ENCODE measurements at regions of chr16 and their contacts with region 1.

Region 1: GRCh38 chr16:12896562-12896961 is 4.8 kb upstream of the SHISA9 start:
- DNase-seq: peak; percentile 32
- ATAC-seq: peak; percentile 84
- H3K4me3 ChIP-seq: no peak overlapping the region
- H3K27ac ChIP-seq: no peak overlapping the region
- H3K4me1 ChIP-seq: peaks cover 3 to 5% of the 10 kb centered on the region in 2 experiments; a peak in 2 of 4 replicates
- H3K27me3 ChIP-seq: peaks cover 3% of the 10 kb centered on the region; the same call in 1 of the 2 replicates
- CTCF ChIP-seq: peak; percentile 41 to 74 (median 70); a peak in 5 of 6 replicates
- POLR2A ChIP-seq: no peak
- RAD21 ChIP-seq: peak; percentile 67

Region 2: DNA sequence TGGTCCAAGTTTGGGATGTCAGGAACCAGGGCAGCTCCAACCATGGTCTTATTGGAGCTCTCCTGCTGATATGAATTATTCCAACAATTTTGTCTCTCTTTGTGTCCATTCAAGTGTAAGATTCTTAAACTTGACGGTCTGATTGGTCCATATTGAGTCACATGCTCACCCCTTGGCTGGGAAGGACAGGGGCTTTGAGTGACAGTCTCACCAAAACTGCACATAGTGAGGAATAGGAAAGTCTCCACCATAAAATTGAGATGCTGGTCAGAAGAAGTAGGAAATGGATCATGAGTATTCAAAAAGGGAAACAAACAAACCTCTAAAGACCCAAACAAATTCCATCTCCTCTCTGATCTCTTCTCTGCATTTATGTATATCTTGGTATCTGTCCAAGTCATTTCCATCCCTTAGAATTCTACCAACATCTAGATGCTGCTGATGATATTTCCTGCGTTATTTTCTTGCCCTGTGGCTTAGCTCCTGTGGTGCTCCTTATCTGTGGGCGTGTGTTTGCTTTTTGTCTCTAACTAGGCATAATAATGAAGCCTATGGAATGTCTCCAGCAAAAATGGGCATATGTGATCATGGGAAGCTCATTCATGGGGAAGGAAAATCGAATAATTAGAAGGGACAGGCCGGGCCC is 38.5 kb after region 1 on chr16:
- CTCF ChIA-PET with region 1: no interaction called
- POLR2A ChIA-PET with region 1: no interaction called
- RAD21 ChIA-PET with region 1: no interaction called
- intact Hi-C with region 1: no loop called
- DNase-seq: no peak
- ATAC-seq: no peak
- H3K4me3 ChIP-seq: no peak overlapping the region
- H3K27ac ChIP-seq: no peak overlapping the region
- H3K4me1 ChIP-seq: no peaks in the 10 kb centered on the region
- H3K27me3 ChIP-seq: peaks cover 17% of the 10 kb centered on the region
- CTCF ChIP-seq: no peak
- POLR2A ChIP-seq: no peak
- RAD21 ChIP-seq: no peak

Region 3: DNA sequence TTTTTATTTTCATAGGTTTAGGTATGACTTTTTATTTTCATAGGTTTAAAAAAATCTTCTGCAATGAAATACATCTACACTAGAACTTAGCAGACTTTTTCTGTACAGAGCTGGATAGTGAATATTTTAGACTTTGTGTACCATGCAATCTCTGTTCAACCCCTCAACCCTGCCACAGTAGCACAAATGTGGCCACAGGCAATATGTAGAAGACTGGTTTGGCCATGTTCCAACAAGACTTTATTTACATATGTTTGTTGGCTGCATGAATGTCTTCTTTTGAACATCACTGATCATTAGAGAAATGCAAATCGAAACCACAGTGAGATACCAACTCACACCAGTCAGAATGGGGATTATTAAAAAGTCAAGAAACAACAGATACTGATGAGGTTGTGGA is 234.0 kb after region 1 on chr16:
- CTCF ChIA-PET with region 1: no interaction called
- POLR2A ChIA-PET with region 1: no interaction called
- RAD21 ChIA-PET with region 1: no interaction called
- intact Hi-C with region 1: no loop called
- DNase-seq: no peak
- ATAC-seq: no peak
- H3K4me3 ChIP-seq: no peak overlapping the region
- H3K27ac ChIP-seq: no peak overlapping the region
- H3K4me1 ChIP-seq: no peaks in the 10 kb centered on the region
- H3K27me3 ChIP-seq: no peaks in the 10 kb centered on the region; the same call in 1 of the 2 replicates
- CTCF ChIP-seq: no peak
- POLR2A ChIP-seq: no peak
- RAD21 ChIP-seq: no peak

Region 4: DNA sequence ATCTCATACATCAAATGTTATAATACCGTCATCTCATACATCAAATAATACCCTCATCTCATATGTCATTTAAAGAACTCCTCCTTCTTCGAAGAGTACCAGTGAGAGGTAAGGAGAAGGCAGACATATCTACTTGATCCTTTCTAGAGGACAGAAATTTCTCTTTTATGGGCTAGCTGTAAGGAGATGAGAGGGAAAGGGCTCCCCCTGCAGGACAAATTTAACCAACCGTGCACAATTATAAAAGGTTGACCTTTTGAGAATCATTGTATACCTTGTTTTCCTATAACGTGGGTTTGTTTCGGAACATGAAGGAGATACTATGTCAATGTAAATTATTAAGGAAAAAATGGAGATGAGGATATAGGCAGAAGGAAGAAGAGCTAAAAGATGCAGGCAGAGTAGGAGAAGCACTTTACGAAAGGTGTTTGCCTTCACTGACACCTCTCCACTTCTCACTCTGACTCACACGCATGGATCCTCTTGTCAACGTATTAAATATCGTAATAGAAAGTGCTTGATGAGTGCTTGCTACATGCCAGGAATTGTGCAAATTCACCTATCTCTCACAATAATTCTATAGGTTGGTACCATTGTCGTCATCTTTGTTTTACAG is 557.5 kb after region 1 on chr16:
- CTCF ChIA-PET with region 1: no interaction called
- POLR2A ChIA-PET with region 1: no interaction called
- RAD21 ChIA-PET with region 1: no interaction called
- intact Hi-C with region 1: loop called (anchors 1 kb)
- DNase-seq: peak; percentile 4
- ATAC-seq: no peak
- H3K4me3 ChIP-seq: no peak overlapping the region
- H3K27ac ChIP-seq: no peak overlapping the region
- H3K4me1 ChIP-seq: no peaks in the 10 kb centered on the region
- H3K27me3 ChIP-seq: no peaks in the 10 kb centered on the region; the same call in 1 of the 2 replicates
- CTCF ChIP-seq: peak; percentile 18 to 72 (median 47); a peak in 4 of 6 replicates
- POLR2A ChIP-seq: no peak
- RAD21 ChIP-seq: peak; percentile 34

Region 5: GRCh38 chr16:13873835-13874438 is 977.4 kb after region 1 on chr16:
- CTCF ChIA-PET with region 1: no interaction called
- POLR2A ChIA-PET with region 1: no interaction called
- RAD21 ChIA-PET with region 1: no interaction called
- intact Hi-C with region 1: loop called (anchors 2 kb)
- DNase-seq: peak; percentile 28
- ATAC-seq: peak; percentile 83
- H3K4me3 ChIP-seq: no peak overlapping the region
- H3K27ac ChIP-seq: no peak overlapping the region
- H3K4me1 ChIP-seq: no peaks in the 10 kb centered on the region
- H3K27me3 ChIP-seq: no peaks in the 10 kb centered on the region
- CTCF ChIP-seq: peak; percentile 48 to 77 (median 66); a peak in 5 of 6 replicates
- POLR2A ChIP-seq: no peak
- RAD21 ChIP-seq: peak; percentile 69

Measured in HCT116 (cell line).